Body of pancreas (tissue), 4 donors: ENCODE measurements at regions of chr19 and their contacts with region 1.

Region 1: GRCh38 chr19:43544077-43544476 is 11.1 kb downstream of the ZNF575 start:
- DNase-seq: no peak
- ATAC-seq: no peak
- H3K4me3 ChIP-seq: no peak overlapping the region
- H3K27ac ChIP-seq: no peak overlapping the region
- H3K4me1 ChIP-seq: no peaks in the 10 kb centered on the region
- H3K27me3 ChIP-seq: no peaks in the 10 kb centered on the region
- CTCF ChIP-seq: no peak
- POLR2A ChIP-seq: no peak

Region 2: DNA sequence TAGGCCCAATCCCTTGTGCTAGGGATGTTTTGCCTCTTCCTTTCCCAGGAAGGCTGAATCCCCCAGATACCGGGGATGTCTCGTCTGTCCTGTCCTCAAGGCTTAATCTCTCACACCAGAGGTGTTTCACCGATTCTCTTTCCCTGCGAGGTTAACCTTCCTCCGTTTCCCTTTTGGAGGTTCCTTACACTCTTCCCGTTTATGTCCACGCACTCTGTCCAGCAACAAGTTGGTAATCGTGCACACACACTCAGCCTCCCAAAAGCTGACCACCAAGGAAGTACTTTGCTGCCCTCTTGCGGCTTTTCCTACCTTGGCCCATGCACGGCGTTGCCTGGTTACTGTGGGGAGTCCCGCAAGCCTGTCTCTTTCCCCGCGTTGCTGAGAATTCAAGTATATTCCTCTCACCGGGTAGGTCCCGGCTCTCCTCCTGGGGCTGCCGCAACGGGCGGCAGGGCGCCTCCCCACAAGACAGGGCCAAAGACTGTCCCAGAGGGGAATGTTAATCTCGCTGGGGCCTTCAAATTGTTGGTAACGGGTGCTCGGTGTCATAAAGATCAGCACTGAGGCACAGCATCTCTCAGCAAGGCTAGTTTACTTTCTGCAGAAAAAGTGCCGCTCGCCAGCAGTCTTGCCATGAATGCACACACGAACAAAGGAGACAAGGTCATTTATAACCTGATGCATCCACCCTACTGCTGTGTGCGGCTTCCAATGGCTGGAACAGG is 227.3 kb before region 1 on chr19:
- intact Hi-C with region 1: no loop called
- DNase-seq: peak in 1 of 4 donors; percentile 29
- ATAC-seq: no peak
- H3K4me3 ChIP-seq: no peak overlapping the region
- H3K27ac ChIP-seq: no peak overlapping the region
- H3K4me1 ChIP-seq: no peaks in the 10 kb centered on the region
- H3K27me3 ChIP-seq: no peaks in the 10 kb centered on the region
- CTCF ChIP-seq: peak in 1 of 7 experiments; percentile 7
- POLR2A ChIP-seq: no peak

Region 3: GRCh38 chr19:43446746-43447489 is 97.2 kb before region 1 on chr19:
- intact Hi-C with region 1: no loop called
- DNase-seq: peak; percentile 75 to 80 (median 79)
- ATAC-seq: peak; percentile 83
- H3K4me3 ChIP-seq: no peak overlapping the region
- H3K27ac ChIP-seq: no peak overlapping the region
- H3K4me1 ChIP-seq: no peaks in the 10 kb centered on the region
- H3K27me3 ChIP-seq: no peaks in the 10 kb centered on the region
- CTCF ChIP-seq: peak; percentile 80 to 96 (median 92)
- POLR2A ChIP-seq: no peak

Region 4: DNA sequence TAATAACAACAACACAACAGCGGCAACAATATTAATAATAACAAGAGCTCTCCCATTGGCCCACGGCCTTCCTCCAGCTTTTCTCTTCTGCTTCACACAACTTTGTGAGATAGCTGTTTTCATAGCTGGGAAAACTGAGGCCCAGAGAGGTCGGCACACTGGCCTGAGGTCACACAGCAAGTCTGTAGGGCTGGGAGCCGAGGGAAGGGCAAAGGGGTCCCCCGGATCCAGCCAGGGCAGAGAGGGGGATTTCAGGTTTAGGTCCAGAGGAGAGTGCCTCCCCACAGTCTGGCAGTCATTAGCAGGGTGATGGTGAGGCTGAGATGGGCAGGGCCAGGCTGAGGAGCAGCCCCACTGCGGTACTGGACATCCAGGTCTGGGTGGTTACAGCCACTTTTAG is 104.6 kb after region 1 on chr19:
- intact Hi-C with region 1: loop called (anchors 5 kb)
- DNase-seq: no peak
- ATAC-seq: no peak
- H3K4me3 ChIP-seq: no peak overlapping the region
- H3K27ac ChIP-seq: no peak overlapping the region
- H3K4me1 ChIP-seq: peaks cover 10% of the 10 kb centered on the region
- H3K27me3 ChIP-seq: no peaks in the 10 kb centered on the region
- CTCF ChIP-seq: no peak
- POLR2A ChIP-seq: no peak